Activated naive CD4-positive, alpha-beta T cell treated with anti-CD3 and anti-CD28 coated beads for 36 hours (primary cell): ENCODE measurements at regions of chr4 and their contacts with region 1.

Region 1: DNA sequence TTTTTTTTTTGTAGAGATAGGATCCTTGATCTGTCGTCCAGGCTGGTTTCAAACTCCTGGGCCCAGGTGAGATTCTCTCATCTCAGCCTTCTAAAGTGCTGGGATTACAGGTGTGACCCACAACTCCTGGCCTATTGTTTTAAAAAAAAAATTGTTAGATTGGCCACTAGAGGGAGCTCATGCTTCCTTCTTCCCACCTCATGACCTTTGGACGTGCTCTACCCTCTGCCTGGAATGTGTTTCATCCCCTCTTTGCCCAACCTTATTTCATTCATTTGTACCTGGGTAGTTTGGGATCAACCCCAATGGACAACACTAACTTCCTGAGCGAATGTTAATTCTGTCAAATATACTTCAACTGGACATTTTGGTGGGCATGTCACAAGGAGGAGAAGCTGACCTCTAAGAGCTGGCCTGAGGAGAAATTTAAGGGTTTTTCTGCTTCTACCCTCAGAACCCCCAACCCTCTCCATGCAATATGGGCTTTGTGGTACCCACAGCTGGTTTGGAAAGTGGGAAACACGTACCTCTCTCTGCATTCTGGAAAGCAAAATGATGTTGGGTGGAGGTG is 6.4 kb downstream of the PPEF2 start:
- DNase-seq: peak; percentile 18
- H3K4me3 Mint-ChIP-seq: no peak overlapping the region
- H3K27ac Mint-ChIP-seq: no peak overlapping the region
- H3K4me1 Mint-ChIP-seq: no peaks in the 10 kb centered on the region
- H3K27me3 Mint-ChIP-seq: no peaks in the 10 kb centered on the region

Region 2: GRCh38 chr4:75909331-75909844 is 13.6 kb after region 1 on chr4:
- CTCF ChIA-PET with region 1: interaction called, 33 read pairs
- intact Hi-C with region 1: no loop called
- DNase-seq: no peak
- H3K4me3 Mint-ChIP-seq: no peak overlapping the region
- H3K27ac Mint-ChIP-seq: no peak overlapping the region
- H3K4me1 Mint-ChIP-seq: no peaks in the 10 kb centered on the region
- H3K27me3 Mint-ChIP-seq: no peaks in the 10 kb centered on the region

Region 3: DNA sequence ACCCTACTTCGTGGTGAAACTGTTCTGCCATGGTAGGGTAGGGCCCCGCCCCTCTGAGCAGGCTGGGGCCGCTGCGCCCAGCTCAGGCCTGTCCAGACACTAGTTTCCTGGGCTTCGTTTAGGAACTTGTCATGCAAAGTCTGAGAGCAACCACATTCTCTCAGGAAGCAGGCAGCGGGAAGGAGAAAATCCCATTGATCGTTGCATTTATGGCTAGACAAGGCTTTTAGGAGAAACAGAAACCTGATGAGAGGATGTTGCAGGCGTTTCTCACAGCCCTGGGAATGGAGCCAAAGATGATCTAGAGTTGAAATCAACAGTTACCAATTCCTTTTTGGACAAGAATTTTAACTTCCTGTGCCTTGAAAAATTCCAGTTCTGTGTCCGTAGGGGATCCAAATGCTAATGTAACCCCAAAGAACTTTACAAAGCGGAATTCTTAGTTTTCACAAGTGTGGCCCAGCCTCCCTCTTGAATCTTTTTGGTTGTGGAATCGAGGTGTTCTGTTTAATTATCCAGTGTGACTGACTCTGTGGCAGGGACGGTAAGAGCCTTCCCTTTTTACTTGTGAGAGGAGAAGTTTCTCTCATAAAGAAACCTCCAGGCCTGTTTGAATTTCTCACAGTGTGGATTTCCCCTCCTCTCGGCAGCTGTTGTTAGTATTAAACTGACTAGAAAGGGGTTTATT is 116.0 kb after region 1 on chr4:
- CTCF ChIA-PET with region 1: no interaction called
- intact Hi-C with region 1: no loop called
- DNase-seq: peak; percentile 40
- H3K4me3 Mint-ChIP-seq: no peak overlapping the region
- H3K27ac Mint-ChIP-seq: no peak overlapping the region
- H3K4me1 Mint-ChIP-seq: peaks cover 6% of the 10 kb centered on the region
- H3K27me3 Mint-ChIP-seq: peaks cover 9% of the 10 kb centered on the region

Region 4: GRCh38 chr4:76067652-76068286 is 171.9 kb after region 1 on chr4:
- CTCF ChIA-PET with region 1: interaction called, 8 read pairs
- intact Hi-C with region 1: loop called (anchors 1 kb)
- DNase-seq: peak; percentile 90
- H3K4me3 Mint-ChIP-seq: no peak overlapping the region
- H3K27ac Mint-ChIP-seq: no peak overlapping the region
- H3K4me1 Mint-ChIP-seq: no peaks in the 10 kb centered on the region
- H3K27me3 Mint-ChIP-seq: peaks cover 4% of the 10 kb centered on the region

Region 5: GRCh38 chr4:76087007-76087769 is 191.4 kb after region 1 on chr4:
- CTCF ChIA-PET with region 1: interaction called, 14 read pairs
- intact Hi-C with region 1: loop called (anchors 1 kb)
- DNase-seq: peak; percentile 50
- H3K4me3 Mint-ChIP-seq: no peak overlapping the region
- H3K27ac Mint-ChIP-seq: no peak overlapping the region
- H3K4me1 Mint-ChIP-seq: peaks cover 4% of the 10 kb centered on the region
- H3K27me3 Mint-ChIP-seq: no peaks in the 10 kb centered on the region

Region 6: GRCh38 chr4:76905531-76905930 is 1009.7 kb after region 1 on chr4:
- CTCF ChIA-PET with region 1: no interaction called
- intact Hi-C with region 1: no loop called
- DNase-seq: no peak
- H3K4me3 Mint-ChIP-seq: no peak overlapping the region
- H3K27ac Mint-ChIP-seq: no peak overlapping the region
- H3K4me1 Mint-ChIP-seq: no peaks in the 10 kb centered on the region
- H3K27me3 Mint-ChIP-seq: no peaks in the 10 kb centered on the region